Activated T-helper 1 cell treated with anti-CD3 and anti-CD28 coated beads, Interleukin-12 subunit alpha, Interleukin-12 subunit beta, Interleukin-2, Interleukin-4 antibody, amounts not matched to agents 30 ng/mL and 10 ng/mL and 1 ng/mL, durations not matched to agents 14 hours and 24 hours and 36 hours (primary cell): ENCODE measurements at regions of chr5 and their contacts with region 1.

Region 1: DNA sequence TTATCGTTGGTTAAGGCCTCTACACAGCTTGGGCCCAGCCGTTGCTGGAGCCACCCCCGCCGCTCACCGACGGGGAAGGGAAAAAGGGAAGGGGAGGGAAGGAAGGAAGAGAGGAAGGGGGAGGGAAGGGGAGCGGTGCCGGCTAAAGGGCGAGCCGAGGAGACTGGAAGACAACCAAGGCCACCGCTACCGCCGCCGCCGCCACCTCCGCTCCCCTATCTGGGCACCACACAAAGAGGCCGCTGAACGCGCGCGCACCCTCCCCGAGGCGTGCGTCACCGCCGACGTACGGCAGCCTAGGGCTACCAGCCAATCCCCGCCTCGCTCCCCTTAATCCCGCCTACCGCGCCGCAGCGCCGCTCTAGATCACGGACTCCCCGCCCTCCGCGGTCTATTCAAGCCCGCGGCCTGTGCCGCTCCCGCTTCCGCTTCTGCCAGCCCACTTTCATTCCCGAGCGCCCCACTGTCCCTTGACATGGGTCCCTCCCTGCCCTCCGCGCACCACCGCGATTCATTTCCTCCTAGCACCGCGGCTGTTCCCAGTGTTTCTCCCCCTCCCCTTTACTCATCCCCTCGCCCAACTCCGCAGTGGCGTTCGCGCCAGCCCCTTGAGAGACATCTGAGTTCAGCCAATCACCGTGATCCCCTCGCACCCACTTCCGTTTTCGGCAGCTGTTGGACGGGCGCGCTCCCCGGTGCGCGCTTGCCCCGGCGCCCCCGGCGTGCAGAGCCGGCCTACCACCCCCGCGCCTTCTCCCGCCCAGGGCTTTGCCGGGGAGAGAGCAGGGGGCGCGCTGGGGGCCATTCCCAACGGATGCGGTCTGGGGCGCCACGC is at the start of gene HNRNPA0:
- DNase-seq: peak; percentile 94
- H3K4me3 Mint-ChIP-seq: peak within 1 kb of the TSS; percentile 97
- H3K27ac Mint-ChIP-seq: peak within 1 kb of the TSS; percentile 100
- H3K4me1 Mint-ChIP-seq: peaks cover 22% of the 10 kb centered on the region
- H3K27me3 Mint-ChIP-seq: peaks cover 8% of the 10 kb centered on the region
- total RNA-seq, gene HNRNPA0: 37.5 and 37.8 TPM in 2 replicates

Region 2: DNA sequence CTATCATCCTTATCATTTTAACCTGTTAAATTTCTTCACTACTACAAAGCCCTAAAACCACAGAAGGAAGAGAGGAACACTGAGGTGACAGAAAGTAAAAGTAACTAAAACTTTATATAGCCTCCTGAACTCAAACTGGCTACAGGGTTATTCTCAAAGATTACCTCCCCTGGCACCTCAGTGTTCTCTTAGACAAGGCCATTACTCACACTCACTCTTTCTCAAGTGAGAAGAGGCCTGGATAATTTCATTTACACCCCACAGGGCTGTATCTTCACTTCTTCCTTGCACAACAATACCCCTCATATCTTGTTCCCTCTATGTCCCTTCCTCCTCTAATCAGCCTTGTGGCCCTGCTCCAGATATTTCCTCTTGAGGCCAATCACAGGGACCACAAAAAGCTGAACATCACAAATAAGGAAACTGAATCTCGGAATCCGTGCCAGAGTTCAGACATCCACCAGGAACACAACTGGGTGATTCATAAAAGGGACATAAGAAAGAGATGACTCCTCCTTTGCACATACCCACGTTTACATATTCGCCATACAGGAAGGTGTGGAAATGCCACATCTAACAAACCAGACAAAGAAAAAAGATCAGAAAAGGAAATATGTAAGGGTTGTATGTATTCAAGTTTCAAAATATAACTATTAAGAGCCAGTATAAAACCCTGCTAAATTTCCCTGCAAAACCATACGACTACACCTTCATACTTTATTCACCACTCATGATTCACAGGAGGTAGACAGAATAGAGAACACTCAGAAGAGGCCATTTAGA is 16.8 kb before region 1 on chr5:
- intact Hi-C with region 1: loop called (anchors 1 kb)
- DNase-seq: no peak
- H3K4me3 Mint-ChIP-seq: peak overlapping the region; percentile 56
- H3K27ac Mint-ChIP-seq: peak overlapping the region; percentile 83
- H3K4me1 Mint-ChIP-seq: no peaks in the 10 kb centered on the region
- H3K27me3 Mint-ChIP-seq: peaks cover 9% of the 10 kb centered on the region

Region 3: GRCh38 chr5:137888857-137889759 is 134.8 kb after region 1 on chr5 and contains the start of gene PKD2L2:
- intact Hi-C with region 1: loop called (anchors 2 kb)
- DNase-seq: peak; percentile 82
- H3K4me3 Mint-ChIP-seq: peak within 1 kb of the TSS; percentile 84
- H3K27ac Mint-ChIP-seq: peak within 1 kb of the TSS; percentile 89
- H3K4me1 Mint-ChIP-seq: peaks cover 24% of the 10 kb centered on the region
- H3K27me3 Mint-ChIP-seq: peaks cover 2% of the 10 kb centered on the region
- total RNA-seq, gene PKD2L2: not detected in 2 replicates

Region 4: GRCh38 chr5:138213161-138214029 is 459.1 kb after region 1 on chr5 and contains the start of gene CDC23:
- intact Hi-C with region 1: loop called (anchors 2 kb)
- DNase-seq: peak; percentile 89
- H3K4me3 Mint-ChIP-seq: peak within 1 kb of the TSS; percentile 96
- H3K27ac Mint-ChIP-seq: peak within 1 kb of the TSS; percentile 93
- H3K4me1 Mint-ChIP-seq: peaks cover 24% of the 10 kb centered on the region
- H3K27me3 Mint-ChIP-seq: no peaks in the 10 kb centered on the region
- total RNA-seq, gene CDC23: 48.0 and 50.4 TPM in 2 replicates

Region 5: DNA sequence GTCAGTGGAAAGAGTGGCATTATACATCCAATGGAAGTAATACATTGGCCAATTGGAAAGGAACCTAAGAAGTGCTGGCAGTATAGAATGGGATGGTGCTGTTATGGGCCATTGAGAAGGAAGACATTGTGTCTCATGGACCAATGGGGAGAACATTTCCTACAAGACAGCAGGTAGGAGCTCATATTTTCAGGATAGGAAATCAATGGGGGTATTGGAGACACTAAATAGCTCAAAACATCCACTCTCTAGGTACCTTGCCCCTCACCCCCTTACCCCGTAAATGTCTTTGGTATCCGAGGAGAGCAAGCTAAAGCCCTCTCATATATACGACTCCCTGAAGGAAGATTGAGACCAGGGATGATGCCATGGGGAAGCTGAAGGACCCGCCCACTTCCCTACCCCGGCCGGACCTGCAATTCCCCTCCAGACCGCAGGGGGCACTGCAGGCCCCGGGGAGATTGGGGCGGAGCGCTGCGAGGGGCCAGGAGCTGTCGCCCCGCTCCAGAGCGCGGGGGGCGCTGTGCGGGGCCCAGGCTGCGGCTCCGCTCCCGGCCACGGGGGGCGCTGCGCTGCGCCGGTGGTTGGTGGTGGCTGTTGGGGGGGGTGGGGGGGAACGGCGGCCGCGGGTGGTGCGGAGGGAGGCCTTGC is 597.9 kb after region 1 on chr5 and contains the start of gene KDM3B:
- intact Hi-C with region 1: loop called (anchors 5 kb)
- DNase-seq: peak; percentile 93
- H3K4me3 Mint-ChIP-seq: peak within 1 kb of the TSS; percentile 100
- H3K27ac Mint-ChIP-seq: peak within 1 kb of the TSS; percentile 97
- H3K4me1 Mint-ChIP-seq: peaks cover 51% of the 10 kb centered on the region
- H3K27me3 Mint-ChIP-seq: peaks cover 3% of the 10 kb centered on the region
- total RNA-seq, gene KDM3B: 55.0 and 59.3 TPM in 2 replicates